ENCODE measurements at regions of chr19 and their contacts with region 1.

Region 1: DNA sequence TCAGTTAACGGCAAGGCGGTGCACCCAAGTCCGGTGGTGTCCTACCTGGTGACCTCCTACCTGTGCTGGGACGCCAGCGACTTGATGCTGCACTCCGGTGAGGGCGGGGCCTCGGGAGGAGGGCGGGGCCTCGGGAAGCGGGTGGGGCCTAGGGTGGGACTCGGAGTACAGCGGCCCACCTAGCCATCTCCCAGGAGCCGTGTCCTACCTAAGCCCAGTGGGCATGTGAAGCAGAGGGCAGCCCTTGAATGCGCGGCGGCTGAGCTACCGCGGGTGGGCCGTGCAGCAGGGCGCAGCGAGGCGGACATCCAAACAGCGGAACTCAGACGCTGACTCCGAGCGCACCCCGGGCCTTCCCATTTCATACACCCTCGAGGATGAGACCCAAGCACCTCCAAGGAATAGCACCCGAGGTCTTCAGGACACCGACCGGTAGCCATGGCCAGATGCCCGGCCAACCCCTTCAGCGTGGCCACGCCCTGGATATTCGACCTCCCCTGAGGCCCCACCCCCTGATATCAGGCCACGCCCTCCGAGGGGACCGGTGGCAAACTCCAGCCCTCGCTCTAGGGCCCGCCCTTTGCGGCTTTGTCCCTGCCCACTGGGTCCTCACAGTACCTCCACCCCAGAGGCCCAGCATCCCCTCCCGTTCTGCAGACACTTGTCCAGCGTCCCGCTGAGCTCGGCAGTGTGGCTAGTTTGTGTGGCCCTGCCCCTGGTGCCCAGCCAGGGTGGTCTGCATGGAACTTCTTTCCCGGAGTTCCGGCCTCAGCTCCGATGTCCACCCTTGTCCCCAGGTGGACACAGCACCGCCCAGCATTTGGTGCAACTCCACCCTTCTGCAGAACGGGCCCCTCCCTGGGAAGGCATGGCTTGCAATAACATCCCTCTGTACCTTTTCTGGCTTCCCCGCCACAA is 5.4 kb downstream of the KLK1 start:
- DNase-seq: peak; percentile 72
- H3K4me3 Mint-ChIP-seq: peak overlapping the region; percentile 67
- H3K27ac Mint-ChIP-seq: peak overlapping the region; percentile 37
- H3K4me1 Mint-ChIP-seq: peaks cover 43% of the 10 kb centered on the region
- H3K27me3 Mint-ChIP-seq: peaks cover 64% of the 10 kb centered on the region

Region 2: GRCh38 chr19:50835785-50836542 is 17.8 kb after region 1 on chr19:
- CTCF ChIA-PET with region 1: no interaction called
- intact Hi-C with region 1: loop called (anchors 2 kb)
- DNase-seq: peak; percentile 78
- H3K4me3 Mint-ChIP-seq: peak overlapping the region; percentile 73
- H3K27ac Mint-ChIP-seq: no peak overlapping the region
- H3K4me1 Mint-ChIP-seq: peaks cover 7% of the 10 kb centered on the region
- H3K27me3 Mint-ChIP-seq: peaks cover 47% of the 10 kb centered on the region

Region 3: GRCh38 chr19:50858896-50859295 is 40.7 kb after region 1 on chr19:
- CTCF ChIA-PET with region 1: no interaction called
- intact Hi-C with region 1: no loop called
- DNase-seq: no peak
- H3K4me3 Mint-ChIP-seq: no peak overlapping the region
- H3K27ac Mint-ChIP-seq: no peak overlapping the region
- H3K4me1 Mint-ChIP-seq: no peaks in the 10 kb centered on the region
- H3K27me3 Mint-ChIP-seq: peaks cover 51% of the 10 kb centered on the region

Measured in activated naive CD4-positive, alpha-beta T cell treated with anti-CD3 and anti-CD28 coated beads for 36 hours (primary cell).